ENCODE measurements at regions of chr1 and their contacts with region 1.

Region 1: GRCh38 chr1:109493805-109494539 is at the start of gene CYB561D1:
- DNase-seq: peak; percentile 92
- ATAC-seq: peak; percentile 92
- H3K4me3 Mint-ChIP-seq: peak within 1 kb of the TSS; percentile 99
- H3K27ac Mint-ChIP-seq: peak within 1 kb of the TSS; percentile 87
- H3K4me1 Mint-ChIP-seq: peaks cover 46% of the 10 kb centered on the region
- H3K27me3 Mint-ChIP-seq: no peaks in the 10 kb centered on the region
- total RNA-seq, gene CYB561D1: 11.0 to 15.0 TPM

Region 2: DNA sequence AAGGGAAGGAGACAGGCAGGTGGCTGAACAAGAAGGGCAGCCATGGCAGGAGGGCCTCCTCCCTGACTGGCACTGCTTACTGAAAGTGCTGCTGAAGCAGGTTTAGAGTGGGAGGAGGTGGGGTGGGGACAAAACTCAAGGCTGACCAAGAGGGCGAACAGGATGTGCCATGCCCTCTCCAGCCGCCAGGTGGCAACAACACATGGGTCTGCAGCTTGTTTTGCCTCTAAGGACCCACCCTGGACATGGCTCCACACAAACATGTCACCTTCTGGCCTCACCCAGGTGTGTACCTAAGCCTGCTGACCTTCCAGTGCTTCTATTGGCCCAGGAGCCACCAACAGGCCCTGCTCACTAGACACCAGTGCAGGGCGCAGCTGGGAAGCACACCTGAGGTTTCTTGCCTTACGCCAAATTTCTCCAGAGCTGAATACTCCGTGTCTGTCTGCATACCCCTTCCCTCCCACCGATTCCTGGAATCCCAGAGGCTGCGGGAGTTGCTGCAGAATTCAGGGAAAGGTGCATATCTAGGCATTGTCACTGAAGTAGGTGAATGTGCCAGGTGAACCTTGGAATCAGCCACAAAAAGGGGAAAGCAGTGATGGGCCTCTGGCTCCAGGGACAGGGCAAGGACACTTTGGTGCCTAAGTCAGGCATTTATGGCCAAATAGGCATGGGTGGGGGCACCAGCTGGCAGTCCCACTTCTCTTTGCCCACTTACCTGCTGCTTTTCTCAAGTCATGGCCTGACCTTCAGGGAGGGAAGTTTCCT is 216.4 kb before region 1 on chr1:
- CTCF ChIA-PET with region 1: interaction called, 21 read pairs
- DNase-seq: peak; percentile 83
- ATAC-seq: peak; percentile 83
- H3K4me3 Mint-ChIP-seq: no peak overlapping the region
- H3K27ac Mint-ChIP-seq: peak overlapping the region; percentile 44
- H3K4me1 Mint-ChIP-seq: peaks cover 22% of the 10 kb centered on the region
- H3K27me3 Mint-ChIP-seq: no peaks in the 10 kb centered on the region

Region 3: GRCh38 chr1:109426278-109427170 is 67.4 kb before region 1 on chr1 and contains the start of gene PSMA5:
- CTCF ChIA-PET with region 1: interaction called, 18 read pairs
- DNase-seq: peak; percentile 99
- ATAC-seq: peak; percentile 94
- H3K4me3 Mint-ChIP-seq: peak within 1 kb of the TSS; percentile 90
- H3K27ac Mint-ChIP-seq: peak within 1 kb of the TSS; percentile 99
- H3K4me1 Mint-ChIP-seq: peaks cover 37% of the 10 kb centered on the region
- H3K27me3 Mint-ChIP-seq: no peaks in the 10 kb centered on the region
- total RNA-seq, gene PSMA5: 178 to 211 TPM

Region 4: DNA sequence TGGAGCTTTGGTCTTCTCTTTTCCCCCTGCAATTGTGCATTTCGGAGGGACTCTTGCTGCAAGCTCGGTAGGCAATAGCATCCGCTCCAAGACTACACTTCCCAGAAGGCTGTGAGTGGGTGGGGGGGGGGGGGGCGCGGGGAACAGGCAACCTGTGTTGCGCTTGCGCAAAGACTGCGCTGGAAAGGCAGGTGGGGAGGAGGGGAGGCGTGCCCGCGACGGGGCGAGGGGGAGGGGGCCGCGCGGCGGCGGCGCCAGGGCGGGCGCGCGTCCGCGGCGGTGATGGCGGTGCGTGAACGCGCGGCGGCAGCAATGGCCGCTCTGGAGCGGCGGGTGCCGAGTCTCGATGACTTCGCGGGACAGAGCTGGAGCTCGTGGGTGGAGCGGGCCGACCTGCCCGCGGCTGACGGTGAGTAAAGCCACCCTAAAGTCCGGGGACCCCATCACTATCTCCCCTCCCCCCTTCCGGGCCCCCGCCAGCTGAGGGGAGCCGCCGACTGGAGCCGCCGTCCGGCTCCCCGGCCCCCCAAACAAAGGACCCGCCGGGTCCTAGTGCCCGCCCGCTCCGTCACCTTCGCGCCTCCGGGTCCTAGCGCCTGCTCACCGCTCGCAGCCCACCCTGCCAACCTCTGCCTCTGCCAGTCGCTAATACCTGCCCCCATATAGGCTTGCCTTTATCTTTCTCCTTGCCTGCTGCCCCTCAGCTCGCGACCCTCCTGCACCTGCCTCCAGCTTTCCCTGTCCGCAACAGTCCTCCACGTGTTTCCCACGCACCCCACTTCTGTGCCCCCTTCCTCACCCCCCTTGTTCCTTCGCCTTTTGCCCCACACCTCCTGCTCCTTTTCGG is 10.1 kb before region 1 on chr1 and contains the start of gene ATXN7L2:
- CTCF ChIA-PET with region 1: interaction called, 1,550 read pairs
- DNase-seq: peak; percentile 94
- ATAC-seq: peak; percentile 82
- H3K4me3 Mint-ChIP-seq: peak within 1 kb of the TSS; percentile 93
- H3K27ac Mint-ChIP-seq: peak within 1 kb of the TSS; percentile 89
- H3K4me1 Mint-ChIP-seq: peaks cover 33% of the 10 kb centered on the region
- H3K27me3 Mint-ChIP-seq: peaks cover 11% of the 10 kb centered on the region
- total RNA-seq, gene ATXN7L2: 10.4 to 11.1 TPM